ENCODE measurements at regions of chr7 and their contacts with region 1.

Region 1: GRCh38 chr7:76314042-76314721 is 11.7 kb downstream of the HSPB1 start:
- DNase-seq: peak; percentile 89 to 99 (median 97)

Region 2: DNA sequence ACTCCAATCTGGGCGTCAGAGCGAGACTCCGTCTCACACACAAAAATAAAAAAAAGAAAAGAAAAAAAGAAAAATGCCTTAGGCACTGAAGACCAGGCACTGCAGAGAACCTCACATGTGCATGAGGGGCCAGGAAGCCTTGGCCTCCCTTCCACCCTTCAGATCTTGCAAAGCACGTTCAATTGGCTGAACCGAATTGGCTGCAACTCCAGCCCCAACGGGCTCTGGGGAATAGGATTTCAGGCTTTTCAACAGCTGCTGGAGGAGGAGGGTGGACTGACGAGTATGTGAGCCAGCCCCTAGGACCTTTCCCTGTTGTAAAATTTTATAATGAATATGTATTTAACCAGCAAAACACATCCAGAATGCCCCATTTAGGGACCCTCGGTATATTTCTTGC is 336.4 kb before region 1 on chr7:
- intact Hi-C with region 1: no loop called
- DNase-seq: peak in 1 of 10 donors; percentile 44

Region 3: DNA sequence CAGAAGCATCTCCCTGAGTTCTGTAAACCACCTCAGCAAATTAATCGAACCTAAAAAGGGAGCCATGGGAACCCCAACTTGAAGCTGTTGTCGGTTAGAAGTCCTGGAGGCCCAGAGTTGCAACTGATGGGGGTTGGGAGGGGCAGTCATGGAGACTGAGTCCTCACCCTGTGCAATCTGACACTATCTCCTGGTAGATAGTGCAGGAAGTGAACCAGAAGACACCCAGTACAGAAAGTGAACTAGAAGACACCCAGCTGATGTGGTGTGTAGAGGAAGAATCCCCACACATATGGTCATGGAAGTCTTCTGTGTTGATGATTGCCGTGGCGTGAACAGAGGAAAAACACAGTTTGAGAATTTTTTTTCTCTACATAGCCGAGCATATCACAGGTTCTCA is 171.3 kb before region 1 on chr7:
- intact Hi-C with region 1: no loop called
- DNase-seq: no peak

Region 4: GRCh38 chr7:76179686-76180085 is 134.5 kb before region 1 on chr7:
- intact Hi-C with region 1: loop called (anchors 1 kb)
- DNase-seq: peak in 1 of 10 donors; percentile 20

Region 5: DNA sequence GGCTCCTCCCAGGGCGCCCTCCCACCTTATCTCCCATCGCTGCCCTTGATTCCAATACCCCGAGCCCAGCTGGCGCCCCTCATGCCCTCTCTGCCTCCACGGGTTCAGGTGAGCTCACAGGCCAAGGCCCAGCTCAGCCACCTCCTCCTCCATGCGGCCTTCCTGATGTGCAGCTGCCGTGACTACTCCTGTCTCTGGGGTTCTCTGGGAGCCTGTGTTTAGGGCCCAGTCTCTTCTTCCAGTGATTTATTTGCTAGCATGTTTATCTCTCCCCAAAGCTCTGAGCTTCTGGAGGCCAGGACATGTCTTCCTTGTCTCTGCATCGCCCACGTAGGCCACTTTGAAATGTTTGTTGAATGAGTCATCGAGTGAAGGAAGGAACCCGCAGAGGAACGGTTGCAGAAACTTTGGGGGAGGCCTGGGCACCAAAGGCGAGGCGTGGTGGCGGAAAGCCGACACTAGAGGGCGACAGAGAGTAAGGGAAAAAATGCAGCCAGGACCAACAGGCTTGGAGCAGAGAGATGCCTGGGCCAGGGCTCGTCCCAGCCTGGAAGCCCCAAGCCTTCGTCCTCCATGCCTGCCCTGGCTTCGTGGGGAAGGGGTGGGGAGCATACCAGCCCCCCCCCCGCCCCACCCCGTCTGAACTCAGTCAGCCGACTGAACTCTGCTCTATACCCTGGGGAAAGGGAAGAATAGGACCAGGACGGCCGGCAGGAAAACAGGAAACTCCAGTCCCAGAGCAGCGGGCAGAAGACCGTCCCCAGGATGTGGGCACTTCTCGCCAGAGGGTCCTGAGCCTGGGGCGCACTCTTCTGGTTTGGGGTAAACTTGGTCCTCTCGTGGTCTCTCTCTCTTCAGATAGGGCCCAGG is 22.6 kb before region 1 on chr7:
- intact Hi-C with region 1: loop called (anchors 1 kb)
- DNase-seq: peak; percentile 80 to 98 (median 93)

Region 6: DNA sequence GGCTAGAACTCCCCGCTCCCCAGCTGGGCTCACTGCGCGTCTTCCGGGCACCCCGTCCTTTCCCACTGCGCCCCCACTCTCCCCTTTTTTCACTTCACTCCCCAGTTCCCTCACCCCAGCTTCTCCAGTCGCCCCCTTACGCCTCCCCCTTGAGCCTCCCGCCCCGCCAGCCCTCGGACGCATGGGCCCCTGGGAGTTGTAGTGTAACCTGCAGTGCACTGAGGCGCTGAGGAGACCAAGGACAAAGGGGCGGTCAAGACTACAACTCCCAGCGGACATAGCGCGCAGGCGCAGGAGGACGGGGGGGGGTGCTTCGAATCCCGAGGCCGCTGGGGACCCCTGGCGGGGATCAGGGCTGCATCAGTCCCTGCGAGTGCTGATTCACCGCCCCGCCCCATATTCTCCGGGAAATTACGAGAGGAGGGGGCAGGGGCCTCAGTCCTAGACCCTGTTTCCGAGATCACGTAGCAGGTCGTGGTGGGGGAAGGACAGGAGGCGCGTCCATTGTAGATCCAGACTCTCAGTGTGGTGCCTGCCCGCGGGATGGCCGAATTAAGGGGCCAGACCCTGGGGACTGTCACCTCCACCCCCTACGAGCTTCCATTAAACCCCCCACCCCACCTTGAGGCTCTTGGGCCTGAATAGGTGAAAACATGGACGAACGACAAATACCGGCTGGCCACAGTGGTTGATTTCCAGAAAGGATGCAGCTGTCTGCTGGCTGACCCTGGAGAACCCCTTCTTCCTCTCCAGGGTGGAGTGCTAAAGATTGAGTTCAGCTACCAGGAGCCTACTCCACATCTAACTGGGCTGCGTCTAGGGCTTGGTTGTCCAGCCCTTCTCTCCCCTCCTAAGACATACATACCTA is 45.2 kb after region 1 on chr7:
- intact Hi-C with region 1: loop called (anchors 2 kb)
- DNase-seq: peak; percentile 93 to 100 (median 99)

Region 7: DNA sequence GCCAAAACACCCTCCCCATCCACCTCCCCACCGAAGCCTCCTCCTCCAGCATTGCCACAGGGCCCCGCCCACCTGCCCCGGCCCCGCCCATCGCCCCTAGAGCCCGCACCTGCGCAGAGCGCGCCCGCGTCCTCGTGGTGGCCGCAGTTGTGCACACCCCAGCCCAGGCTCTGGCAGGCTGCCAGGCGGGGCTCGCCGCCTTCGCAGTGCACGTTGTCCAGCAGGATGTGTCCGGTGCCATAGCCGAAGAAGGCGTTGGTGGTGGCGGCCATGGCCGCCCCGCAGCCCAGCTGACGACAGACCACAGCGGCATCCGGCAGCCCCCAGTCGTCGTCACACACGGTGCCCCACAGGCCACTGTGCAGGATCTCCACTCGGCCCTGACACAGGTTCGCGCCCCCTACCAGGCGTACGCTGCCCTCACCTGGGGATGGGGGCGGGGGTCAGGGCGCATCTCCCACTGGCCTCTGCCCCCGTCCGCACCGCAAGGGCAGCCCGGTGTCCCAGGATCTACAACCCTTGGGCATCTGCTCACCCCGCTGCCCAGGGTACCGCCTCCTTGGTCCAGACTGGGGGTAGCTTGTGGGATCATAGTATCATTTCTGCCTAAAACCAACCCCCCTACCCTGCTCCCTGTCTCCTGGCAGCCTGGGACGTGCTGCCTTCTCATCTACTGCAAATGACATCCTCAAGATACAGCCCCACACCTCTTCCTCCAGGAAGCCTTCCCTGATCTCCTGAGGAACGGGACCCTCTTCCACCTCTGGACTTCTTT is 83.4 kb after region 1 on chr7:
- intact Hi-C with region 1: no loop called
- DNase-seq: peak; percentile 50 to 97 (median 68)

Measured in posterior cingulate gyrus (tissue), 11 donors.